B cell (primary cell): ENCODE measurements at regions of chr3 and their contacts with region 1.

Region 1: DNA sequence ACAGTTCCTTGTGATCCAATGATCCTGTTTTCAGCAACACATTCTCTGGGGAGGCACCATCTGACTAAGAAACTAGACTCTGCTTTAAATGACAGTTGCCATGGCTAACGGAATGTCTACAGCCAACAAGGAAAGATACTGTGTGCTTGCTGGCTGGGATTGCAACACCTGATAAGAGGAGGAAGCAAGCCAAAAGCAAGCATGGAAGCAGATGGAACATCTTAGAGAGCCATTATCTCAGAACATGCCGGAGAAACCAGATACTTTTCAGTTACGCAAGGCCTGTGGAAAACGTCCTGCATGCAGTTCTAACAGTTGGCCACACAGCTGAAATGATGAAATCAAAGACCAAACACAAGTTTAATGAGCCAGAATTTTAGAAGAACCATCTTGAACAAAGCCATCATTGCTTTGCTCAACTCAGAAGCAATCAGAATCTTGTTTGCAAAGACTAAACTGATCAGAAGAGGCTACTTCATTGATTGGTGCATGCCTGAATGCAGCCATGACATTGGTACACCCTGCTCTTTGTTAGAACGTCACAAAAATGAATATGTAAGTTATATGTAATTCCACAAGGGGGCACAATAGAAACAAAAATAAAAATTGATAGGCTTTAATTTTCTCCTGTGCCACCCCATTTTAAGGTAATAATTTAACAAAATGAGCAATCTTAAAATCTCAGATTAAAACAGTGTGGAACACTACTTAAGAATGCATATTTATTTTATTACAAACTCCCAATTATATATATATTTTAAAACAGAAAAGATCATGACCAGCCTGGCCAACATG is 50.8 kb downstream of the GXYLT2 start:
- DNase-seq: peak; percentile 59
- ATAC-seq: peak; percentile 64
- H3K4me3 ChIP-seq: no peak overlapping the region
- H3K4me3 Mint-ChIP-seq: no peak overlapping the region
- H3K27ac ChIP-seq: no peak overlapping the region
- H3K27ac Mint-ChIP-seq: no peak overlapping the region
- H3K4me1 ChIP-seq: no peaks in the 10 kb centered on the region
- H3K4me1 Mint-ChIP-seq: no peaks in the 10 kb centered on the region
- H3K27me3 ChIP-seq: peaks cover 0 to 3% (median 3%) of the 10 kb centered on the region in 4 experiments
- H3K27me3 Mint-ChIP-seq: peaks cover 17% of the 10 kb centered on the region
- CTCF ChIP-seq: peak; percentile 75

Region 2: DNA sequence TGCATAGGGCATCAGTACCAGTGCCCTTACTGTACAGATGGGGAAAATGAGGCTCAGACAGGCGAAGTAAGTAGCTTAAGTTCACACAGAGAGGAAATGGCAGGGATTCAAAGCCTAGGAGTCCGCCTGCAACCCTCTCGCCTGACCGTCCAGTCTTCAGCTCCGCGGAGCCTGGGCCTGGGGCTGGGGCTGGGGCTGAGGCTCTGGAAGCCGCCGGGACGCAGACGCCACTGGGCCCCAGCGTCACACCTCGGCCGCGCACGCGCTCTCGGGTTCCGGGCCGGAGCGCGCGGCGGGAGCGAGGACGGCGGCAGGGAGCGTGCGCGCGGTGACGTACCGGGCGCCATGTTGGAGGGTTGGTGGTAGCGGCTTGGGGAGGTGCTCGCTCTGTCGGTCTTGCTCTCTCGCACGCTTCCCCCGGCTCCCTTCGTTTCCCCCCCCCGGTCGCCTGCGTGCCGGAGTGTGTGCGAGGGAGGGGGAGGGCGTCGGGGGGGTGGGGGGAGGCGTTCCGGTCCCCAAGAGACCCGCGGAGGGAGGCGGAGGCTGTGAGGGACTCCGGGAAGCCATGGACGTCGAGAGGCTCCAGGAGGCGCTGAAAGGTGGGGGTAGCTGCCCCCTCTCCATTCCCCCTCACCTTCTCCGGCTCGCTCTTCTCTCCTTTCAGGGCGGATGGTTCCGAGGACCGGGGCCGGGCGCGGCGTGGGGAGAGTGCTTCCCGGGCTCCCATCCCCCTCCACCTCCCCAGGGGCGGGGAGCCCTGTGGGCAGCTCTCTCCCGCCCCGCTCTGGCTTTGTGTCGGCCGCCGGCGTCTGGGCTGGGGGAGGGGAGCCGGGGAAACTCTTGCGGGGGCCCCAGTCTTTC is 58.0 kb after region 1 on chr3 and contains the start of gene PPP4R2:
- CTCF ChIA-PET with region 1: interaction called, 3 read pairs
- POLR2A ChIA-PET with region 1: no interaction called
- intact Hi-C with region 1: loop called (anchors 5 kb)
- DNase-seq: peak; percentile 94
- ATAC-seq: peak; percentile 86
- H3K4me3 ChIP-seq: peak within 1 kb of the TSS; percentile 84 to 96 (median 91)
- H3K4me3 Mint-ChIP-seq: peak within 1 kb of the TSS; percentile 90
- H3K27ac ChIP-seq: peak within 1 kb of the TSS; percentile 92
- H3K27ac Mint-ChIP-seq: peak within 1 kb of the TSS; percentile 84
- H3K4me1 ChIP-seq: peaks cover 30 to 33% of the 10 kb centered on the region in 2 donors
- H3K4me1 Mint-ChIP-seq: peaks cover 36% of the 10 kb centered on the region
- H3K27me3 ChIP-seq: no peaks in the 10 kb centered on the region
- H3K27me3 Mint-ChIP-seq: no peaks in the 10 kb centered on the region
- CTCF ChIP-seq: no peak
- total RNA-seq, gene PPP4R2: 57.5 and 64.3 TPM in 2 replicates

Region 3: DNA sequence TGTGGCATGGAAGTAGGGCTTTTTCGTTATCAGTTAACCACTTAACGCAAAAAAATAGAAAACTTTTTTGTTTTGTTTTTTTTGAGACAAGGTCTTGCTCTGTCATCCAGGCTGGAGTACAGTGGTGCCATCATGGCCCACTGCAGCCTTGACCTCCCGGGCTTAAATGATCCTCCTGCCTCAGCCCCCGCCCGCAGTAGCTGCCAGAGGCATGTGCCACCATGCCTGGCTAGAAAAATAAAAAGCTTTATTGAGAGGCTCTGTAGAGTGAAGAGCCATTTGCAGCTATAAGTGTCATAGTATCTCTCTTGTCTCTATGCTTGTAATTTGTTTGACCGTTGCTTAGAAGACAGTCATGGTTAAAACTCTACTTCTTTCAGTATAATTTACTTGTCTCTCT is 71.5 kb after region 1 on chr3:
- CTCF ChIA-PET with region 1: no interaction called
- POLR2A ChIA-PET with region 1: no interaction called
- intact Hi-C with region 1: no loop called
- DNase-seq: no peak
- ATAC-seq: no peak
- H3K4me3 ChIP-seq: no peak overlapping the region
- H3K4me3 Mint-ChIP-seq: no peak overlapping the region
- H3K27ac ChIP-seq: no peak overlapping the region
- H3K27ac Mint-ChIP-seq: no peak overlapping the region
- H3K4me1 ChIP-seq: no peaks in the 10 kb centered on the region
- H3K4me1 Mint-ChIP-seq: peaks cover 50% of the 10 kb centered on the region
- H3K27me3 ChIP-seq: no peaks in the 10 kb centered on the region
- H3K27me3 Mint-ChIP-seq: no peaks in the 10 kb centered on the region
- CTCF ChIP-seq: no peak

Region 4: DNA sequence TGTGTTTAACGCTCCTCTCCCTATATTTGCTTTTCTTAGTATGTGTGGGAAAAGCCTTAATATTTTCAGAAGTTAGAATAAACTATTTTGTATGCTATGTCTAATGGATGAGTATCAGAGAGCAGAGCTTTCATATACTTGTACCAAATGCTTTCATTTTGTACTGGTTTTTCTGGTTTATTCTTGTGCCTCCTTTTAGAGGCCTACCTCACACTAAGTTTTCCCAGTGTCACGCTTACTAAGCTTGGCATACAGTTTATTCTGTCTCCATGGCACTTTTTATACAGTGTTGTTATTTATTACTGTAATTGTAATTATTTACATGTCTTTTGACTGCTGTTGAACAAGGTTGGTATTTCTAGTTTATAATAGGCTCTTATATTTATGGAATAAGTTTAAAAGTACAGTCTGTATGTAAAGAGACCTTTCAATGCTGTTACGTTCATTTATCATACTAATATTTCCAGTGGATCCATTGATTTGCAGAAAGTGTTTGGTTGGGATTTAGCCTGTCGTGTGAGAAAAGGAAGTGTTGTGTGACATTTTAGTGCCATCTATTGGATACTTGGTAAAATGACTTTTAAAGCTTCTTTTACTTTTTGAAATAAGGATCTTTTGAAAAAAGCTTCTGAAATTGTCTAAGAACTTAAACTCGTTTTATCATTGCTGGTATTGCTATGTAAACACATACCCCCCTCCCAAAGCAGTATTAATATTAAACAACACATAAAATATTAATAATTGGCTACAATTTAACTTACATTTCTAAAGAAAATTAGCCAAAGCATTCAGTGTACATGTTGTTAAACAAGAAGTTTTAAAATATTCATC is 117.6 kb after region 1 on chr3:
- CTCF ChIA-PET with region 1: interaction called, 105 read pairs
- POLR2A ChIA-PET with region 1: no interaction called
- intact Hi-C with region 1: no loop called
- DNase-seq: peak; percentile 31
- ATAC-seq: no peak
- H3K4me3 ChIP-seq: no peak overlapping the region
- H3K4me3 Mint-ChIP-seq: no peak overlapping the region
- H3K27ac ChIP-seq: no peak overlapping the region
- H3K27ac Mint-ChIP-seq: no peak overlapping the region
- H3K4me1 ChIP-seq: no peaks in the 10 kb centered on the region
- H3K4me1 Mint-ChIP-seq: peaks cover 4% of the 10 kb centered on the region
- H3K27me3 ChIP-seq: no peaks in the 10 kb centered on the region
- H3K27me3 Mint-ChIP-seq: no peaks in the 10 kb centered on the region
- CTCF ChIP-seq: peak; percentile 83

Region 5: GRCh38 chr3:73502609-73503583 is 564.2 kb after region 1 on chr3:
- CTCF ChIA-PET with region 1: no interaction called
- POLR2A ChIA-PET with region 1: no interaction called
- intact Hi-C with region 1: loop called (anchors 10 kb)
- DNase-seq: peak; percentile 58
- ATAC-seq: no peak
- H3K4me3 ChIP-seq: no peak overlapping the region
- H3K4me3 Mint-ChIP-seq: no peak overlapping the region
- H3K27ac ChIP-seq: no peak overlapping the region
- H3K27ac Mint-ChIP-seq: no peak overlapping the region
- H3K4me1 ChIP-seq: no peaks in the 10 kb centered on the region
- H3K4me1 Mint-ChIP-seq: no peaks in the 10 kb centered on the region
- H3K27me3 ChIP-seq: peaks cover 0 to 2% (median 0%) of the 10 kb centered on the region in 4 experiments
- H3K27me3 Mint-ChIP-seq: peaks cover 25% of the 10 kb centered on the region
- CTCF ChIP-seq: peak; percentile 81